PC-3 (cell line): ENCODE measurements at regions of chr6 and their contacts with region 1.

Region 1: GRCh38 chr6:2166717-2167116 is 78.7 kb downstream of the GMDS start:
- DNase-seq: peak; percentile 20
- ATAC-seq: peak; percentile 24; the same call in 1 of the 2 replicates
- H3K4me3 ChIP-seq: no peak overlapping the region
- H3K27ac ChIP-seq: no peak overlapping the region
- H3K4me1 ChIP-seq: peaks cover 15% of the 10 kb centered on the region
- H3K27me3 ChIP-seq: no peaks in the 10 kb centered on the region
- CTCF ChIP-seq: no peak

Region 2: GRCh38 chr6:1952726-1953360 is 213.9 kb before region 1 on chr6:
- CTCF ChIA-PET with region 1: no interaction called
- POLR2A ChIA-PET with region 1: no interaction called
- intact Hi-C with region 1: no loop called
- DNase-seq: peak; percentile 97
- ATAC-seq: peak; percentile 100
- H3K4me3 ChIP-seq: peak overlapping the region; percentile 47; the same call in 1 of the 2 replicates
- H3K27ac ChIP-seq: peak overlapping the region; percentile 80
- H3K4me1 ChIP-seq: peaks cover 16% of the 10 kb centered on the region
- H3K27me3 ChIP-seq: no peaks in the 10 kb centered on the region
- CTCF ChIP-seq: peak; percentile 32; the same call in 1 of the 2 replicates

Region 3: DNA sequence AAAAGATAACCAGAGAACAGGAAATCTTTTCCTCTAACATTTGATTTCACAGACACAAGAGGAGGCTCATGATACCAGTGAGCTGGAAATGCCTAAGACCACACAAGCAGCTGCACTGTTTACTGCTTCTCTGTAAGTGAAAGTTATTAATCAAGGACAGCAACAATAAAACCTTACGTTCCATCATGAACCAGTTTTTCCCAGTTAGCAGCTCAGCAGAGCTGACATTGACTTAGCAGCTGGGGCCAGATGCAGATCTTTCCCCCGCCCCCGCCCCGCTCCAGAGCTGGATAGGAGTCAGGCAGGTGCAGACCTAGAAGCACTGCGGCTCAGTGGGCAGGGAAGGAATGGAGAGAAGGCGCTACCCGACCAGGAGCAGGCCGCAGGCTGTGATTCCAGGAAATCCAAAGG is 196.6 kb before region 1 on chr6:
- CTCF ChIA-PET with region 1: no interaction called
- POLR2A ChIA-PET with region 1: no interaction called
- intact Hi-C with region 1: no loop called
- DNase-seq: no peak
- ATAC-seq: no peak
- H3K4me3 ChIP-seq: no peak overlapping the region
- H3K27ac ChIP-seq: no peak overlapping the region
- H3K4me1 ChIP-seq: no peaks in the 10 kb centered on the region
- H3K27me3 ChIP-seq: no peaks in the 10 kb centered on the region
- CTCF ChIP-seq: no peak

Region 4: DNA sequence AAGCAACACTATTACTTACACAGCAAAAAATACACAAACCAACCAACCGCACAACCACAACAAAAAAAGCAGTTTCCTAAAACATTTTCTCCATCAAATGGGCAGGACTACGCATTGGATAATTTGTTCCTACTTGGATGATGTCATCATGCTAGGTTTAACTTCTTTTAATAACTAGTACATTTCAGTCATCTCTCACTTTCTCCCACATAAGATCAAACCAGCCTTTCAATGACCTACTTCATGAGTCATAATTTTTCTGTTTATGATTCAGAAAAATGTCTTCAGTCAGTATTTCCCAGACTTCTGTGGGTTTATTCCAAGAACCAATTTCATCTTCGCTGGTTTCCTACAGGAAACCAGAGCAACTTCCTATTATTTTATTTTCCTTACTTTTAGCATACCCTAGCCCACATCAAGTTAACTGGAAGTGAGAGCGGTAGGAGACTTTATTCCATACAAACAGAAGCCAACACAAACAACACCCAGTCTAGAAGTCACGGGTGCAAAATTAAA is 55.5 kb before region 1 on chr6:
- CTCF ChIA-PET with region 1: no interaction called
- POLR2A ChIA-PET with region 1: no interaction called
- intact Hi-C with region 1: loop called (anchors 10 kb)
- DNase-seq: peak; percentile 80
- ATAC-seq: peak; percentile 75
- H3K4me3 ChIP-seq: no peak overlapping the region
- H3K27ac ChIP-seq: peak overlapping the region; percentile 72
- H3K4me1 ChIP-seq: peaks cover 17% of the 10 kb centered on the region
- H3K27me3 ChIP-seq: no peaks in the 10 kb centered on the region
- CTCF ChIP-seq: no peak